ENCODE measurements at regions of chr6 and their contacts with region 1.

Region 1: DNA sequence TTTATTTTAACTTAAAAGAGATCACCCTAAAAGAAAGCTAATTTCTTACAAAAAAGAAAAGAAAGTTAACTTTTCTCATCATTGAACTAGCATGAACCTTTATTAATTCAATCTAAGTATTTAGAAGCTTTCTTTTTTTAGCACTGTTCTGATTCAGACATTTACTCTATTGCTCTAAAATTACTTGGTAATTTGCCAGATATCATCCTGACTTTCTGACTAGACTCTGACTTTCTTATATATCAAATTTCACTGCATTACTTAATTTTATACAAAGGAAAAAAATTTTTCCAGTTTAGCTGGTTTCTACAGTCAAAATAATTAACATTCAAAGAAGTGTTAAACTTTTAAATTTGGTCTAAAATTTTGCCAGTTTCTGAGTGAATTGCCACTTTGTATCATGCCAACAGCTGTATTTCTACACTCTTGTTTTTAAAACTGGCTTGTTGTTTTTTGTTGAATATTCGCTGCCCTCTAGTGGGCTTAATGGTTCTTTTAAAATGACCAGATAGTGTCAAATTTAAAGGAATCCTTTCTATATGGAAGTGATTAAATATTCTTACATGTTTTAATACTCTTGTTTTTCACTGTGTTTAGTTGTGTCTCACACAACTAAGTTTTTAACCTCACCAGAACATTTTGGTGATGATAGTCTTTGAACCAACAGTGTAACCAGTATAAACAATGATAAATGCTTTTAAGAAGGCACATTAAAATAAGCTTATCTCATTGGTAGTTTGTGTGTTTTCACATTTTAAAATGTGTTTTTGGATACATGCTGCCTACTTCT is 102.0 kb downstream of the POPDC3 start:
- DNase-seq: peak; percentile 39
- H3K27ac ChIP-seq: no peak overlapping the region
- CTCF ChIP-seq: peak; percentile 63

Region 2: GRCh38 chr6:104789770-104790190 is 288.0 kb before region 1 on chr6:
- CTCF ChIA-PET with region 1: interaction called, 10 read pairs
- POLR2A ChIA-PET with region 1: no interaction called
- DNase-seq: peak; percentile 17
- H3K27ac ChIP-seq: no peak overlapping the region
- CTCF ChIP-seq: peak; percentile 51

Region 3: GRCh38 chr6:105179244-105180065 is 101.7 kb after region 1 on chr6 and contains the start of gene POPDC3:
- CTCF ChIA-PET with region 1: no interaction called
- POLR2A ChIA-PET with region 1: no interaction called
- DNase-seq: peak; percentile 30
- H3K27ac ChIP-seq: peak within 1 kb of the TSS; percentile 72
- CTCF ChIP-seq: no peak

Region 4: GRCh38 chr6:105282631-105283585 is 205.1 kb after region 1 on chr6:
- CTCF ChIA-PET with region 1: no interaction called
- POLR2A ChIA-PET with region 1: no interaction called
- DNase-seq: no peak
- H3K27ac ChIP-seq: no peak overlapping the region
- CTCF ChIP-seq: no peak